Right ventricle myocardium inferior (tissue), 1 donor: ENCODE measurements at regions of chr21 and their contacts with region 1.

Region 1: DNA sequence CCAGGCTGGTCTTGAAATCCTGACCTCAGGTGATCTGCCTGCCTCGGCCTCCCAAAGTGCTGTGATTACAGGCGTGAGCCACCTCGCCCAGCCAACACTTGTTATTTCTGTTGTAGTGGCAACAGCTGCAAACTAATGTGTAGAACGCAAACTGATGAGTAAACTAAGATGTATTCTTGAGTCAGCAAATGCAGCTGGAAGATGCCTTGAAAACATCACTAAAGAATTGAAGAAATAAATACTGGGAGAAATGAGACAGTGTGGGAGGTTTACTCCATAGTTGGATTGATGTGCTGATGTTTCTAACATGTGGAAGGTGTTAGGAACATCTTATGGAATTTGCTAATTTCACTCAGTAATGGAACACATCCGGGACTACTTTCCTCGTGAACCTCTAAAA is 61.3 kb upstream of the KCNE2 start:
- DNase-seq: no peak
- ATAC-seq: no peak

Region 2: GRCh38 chr21:34157521-34157920 is 145.0 kb before region 1 on chr21:
- intact Hi-C with region 1: no loop called
- DNase-seq: no peak
- ATAC-seq: no peak

Region 3: DNA sequence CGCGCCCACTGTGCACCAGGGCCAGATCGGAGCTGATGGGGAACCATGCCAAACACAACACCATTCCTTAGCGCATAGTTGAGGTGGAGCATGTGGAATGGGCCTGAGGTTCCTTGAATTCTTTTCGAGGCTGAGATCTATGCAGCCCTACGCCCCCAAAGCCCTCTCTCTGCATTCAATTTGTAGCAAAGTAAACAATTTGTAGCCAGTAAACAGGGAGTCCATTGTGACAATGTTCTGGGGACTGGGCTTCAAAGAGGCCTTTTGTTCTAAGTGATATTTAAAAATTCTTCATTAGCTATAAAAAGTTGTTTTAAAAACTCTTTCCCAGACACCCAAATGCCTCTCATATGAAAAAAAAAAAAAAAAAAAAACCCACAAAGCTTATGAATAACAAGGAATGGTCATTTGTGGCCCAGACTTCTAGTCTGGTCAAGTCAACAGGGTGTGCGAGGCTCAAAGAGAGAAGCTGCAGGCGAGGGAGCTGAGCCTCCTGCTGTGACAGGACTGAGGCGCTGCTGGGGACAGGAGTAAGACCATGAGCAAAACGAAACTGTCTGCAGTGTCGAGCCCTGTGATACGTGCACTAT is 30.7 kb after region 1 on chr21:
- intact Hi-C with region 1: no loop called
- DNase-seq: no peak
- ATAC-seq: no peak

Region 4: GRCh38 chr21:34345091-34345871 is 42.8 kb after region 1 on chr21:
- intact Hi-C with region 1: loop called (anchors 5 kb)
- DNase-seq: no peak
- ATAC-seq: peak; percentile 40